WTC11 (cell line): ENCODE measurements at regions of chr1 and their contacts with region 1.

Region 1: GRCh38 chr1:119948342-119949214 is 52.3 kb upstream of the ADAM30 start:
- DNase-seq: peak; percentile 87
- ATAC-seq: peak; percentile 90
- H3K4me3 Mint-ChIP-seq: no peak overlapping the region
- H3K27ac Mint-ChIP-seq: no peak overlapping the region
- H3K4me1 Mint-ChIP-seq: no peaks in the 10 kb centered on the region
- H3K27me3 Mint-ChIP-seq: no peaks in the 10 kb centered on the region
- CTCF ChIP-seq: peak; percentile 85

Region 2: GRCh38 chr1:119686649-119687048 is 261.9 kb before region 1 on chr1:
- CTCF ChIA-PET with region 1: no interaction called
- POLR2A ChIA-PET with region 1: no interaction called
- DNase-seq: no peak
- ATAC-seq: no peak
- H3K4me3 Mint-ChIP-seq: no peak overlapping the region
- H3K27ac Mint-ChIP-seq: peak overlapping the region; percentile 65; the same call in 1 of the 2 replicates
- H3K4me1 Mint-ChIP-seq: peaks cover 55% of the 10 kb centered on the region
- H3K27me3 Mint-ChIP-seq: no peaks in the 10 kb centered on the region
- CTCF ChIP-seq: no peak

Region 3: DNA sequence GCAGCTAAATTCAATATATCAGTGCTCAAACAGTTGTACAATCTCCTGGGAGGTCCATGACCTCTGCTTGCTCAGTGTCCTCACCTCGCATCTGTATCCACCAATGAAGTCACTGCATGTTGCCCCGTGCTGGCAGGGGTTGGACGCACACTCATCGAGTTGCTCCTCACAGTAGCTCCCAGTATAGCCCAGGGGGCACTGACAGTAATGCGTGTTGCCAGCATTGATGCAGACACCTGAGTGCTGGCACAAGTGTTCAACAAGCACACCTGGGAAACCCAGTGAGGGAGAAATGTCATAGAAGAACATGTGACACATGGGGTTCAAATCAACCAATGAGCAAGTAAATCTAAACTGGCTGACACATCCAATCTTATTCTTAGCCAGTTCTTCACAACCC is 11.4 kb before region 1 on chr1:
- CTCF ChIA-PET with region 1: interaction called, 11 read pairs
- POLR2A ChIA-PET with region 1: no interaction called
- DNase-seq: no peak
- ATAC-seq: no peak
- H3K4me3 Mint-ChIP-seq: no peak overlapping the region
- H3K27ac Mint-ChIP-seq: no peak overlapping the region
- H3K4me1 Mint-ChIP-seq: peaks cover 13% of the 10 kb centered on the region
- H3K27me3 Mint-ChIP-seq: no peaks in the 10 kb centered on the region
- CTCF ChIP-seq: no peak

Region 4: GRCh38 chr1:119968068-119968492 is 19.5 kb after region 1 on chr1:
- CTCF ChIA-PET with region 1: interaction called, 20 read pairs
- POLR2A ChIA-PET with region 1: no interaction called
- DNase-seq: peak; percentile 86
- ATAC-seq: peak; percentile 94
- H3K4me3 Mint-ChIP-seq: no peak overlapping the region
- H3K27ac Mint-ChIP-seq: no peak overlapping the region; the same call in none of the 2 replicates
- H3K4me1 Mint-ChIP-seq: no peaks in the 10 kb centered on the region
- H3K27me3 Mint-ChIP-seq: no peaks in the 10 kb centered on the region
- CTCF ChIP-seq: peak; percentile 89